ENCODE measurements at regions of chr3 and their contacts with region 1.

Region 1: GRCh38 chr3:146640955-146641867 is 36.1 kb upstream of the PLSCR5 start:
- DNase-seq: peak; percentile 21 to 61
- ATAC-seq: peak; percentile 87 to 92
- H3K4me3 ChIP-seq: no peak overlapping the region
- H3K27ac ChIP-seq: no peak overlapping the region
- H3K4me1 ChIP-seq: no peaks in the 10 kb centered on the region
- CTCF ChIP-seq: peak; percentile 64
- EP300 ChIP-seq: no peak
- POLR2A ChIP-seq: no peak
- RAD21 ChIP-seq: peak; percentile 68 to 78

Region 2: DNA sequence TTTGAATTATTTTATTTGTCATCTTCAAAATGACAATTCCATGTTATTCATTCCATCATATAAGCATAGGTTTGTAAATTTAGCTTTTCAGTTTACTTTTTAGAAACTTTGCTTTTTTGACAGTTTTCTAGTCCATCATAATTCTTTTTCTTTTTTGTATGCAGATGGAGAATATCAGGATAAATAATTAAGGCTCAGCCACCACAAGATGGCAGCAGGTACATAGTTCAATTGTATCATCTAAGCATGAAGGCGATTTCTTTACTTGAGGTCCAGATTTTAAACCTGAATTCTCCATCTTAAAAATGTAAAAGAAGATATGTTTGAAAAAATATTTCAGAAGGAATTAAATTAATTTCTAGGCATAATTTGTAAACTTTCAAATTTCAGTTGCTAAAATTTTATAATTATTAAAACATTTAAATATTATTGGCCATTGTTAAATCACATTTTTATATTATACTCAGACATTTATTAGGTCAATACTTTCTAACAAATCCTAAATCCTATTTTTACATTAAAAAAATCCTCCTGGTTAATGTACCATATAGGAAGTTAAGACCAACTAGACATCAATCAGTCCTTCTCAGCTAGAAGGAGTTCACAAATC is 51.2 kb before region 1 on chr3:
- CTCF ChIA-PET with region 1: interaction called, 24 read pairs
- POLR2A ChIA-PET with region 1: no interaction called
- DNase-seq: peak; percentile 31 to 60
- ATAC-seq: peak in 1 of 2 experiments; percentile 72; a peak in 3 of 6 replicates
- H3K4me3 ChIP-seq: no peak overlapping the region
- H3K27ac ChIP-seq: no peak overlapping the region
- H3K4me1 ChIP-seq: no peaks in the 10 kb centered on the region
- CTCF ChIP-seq: peak; percentile 88
- EP300 ChIP-seq: no peak
- POLR2A ChIP-seq: no peak
- RAD21 ChIP-seq: peak; percentile 67 to 69

Measured in A549 (cell line).